ENCODE measurements at regions of chr11 and their contacts with region 1.

Region 1: GRCh38 chr11:86145439-86146156 is 76.7 kb upstream of the PICALM start:
- DNase-seq: no peak
- H3K4me3 ChIP-seq: no peak overlapping the region
- H3K27ac ChIP-seq: peak overlapping the region in 28 of 59 donors; percentile 0 to 80 (median 46)
- H3K27me3 ChIP-seq: no peaks in the 10 kb centered on the region
- CTCF ChIP-seq: no peak

Region 2: DNA sequence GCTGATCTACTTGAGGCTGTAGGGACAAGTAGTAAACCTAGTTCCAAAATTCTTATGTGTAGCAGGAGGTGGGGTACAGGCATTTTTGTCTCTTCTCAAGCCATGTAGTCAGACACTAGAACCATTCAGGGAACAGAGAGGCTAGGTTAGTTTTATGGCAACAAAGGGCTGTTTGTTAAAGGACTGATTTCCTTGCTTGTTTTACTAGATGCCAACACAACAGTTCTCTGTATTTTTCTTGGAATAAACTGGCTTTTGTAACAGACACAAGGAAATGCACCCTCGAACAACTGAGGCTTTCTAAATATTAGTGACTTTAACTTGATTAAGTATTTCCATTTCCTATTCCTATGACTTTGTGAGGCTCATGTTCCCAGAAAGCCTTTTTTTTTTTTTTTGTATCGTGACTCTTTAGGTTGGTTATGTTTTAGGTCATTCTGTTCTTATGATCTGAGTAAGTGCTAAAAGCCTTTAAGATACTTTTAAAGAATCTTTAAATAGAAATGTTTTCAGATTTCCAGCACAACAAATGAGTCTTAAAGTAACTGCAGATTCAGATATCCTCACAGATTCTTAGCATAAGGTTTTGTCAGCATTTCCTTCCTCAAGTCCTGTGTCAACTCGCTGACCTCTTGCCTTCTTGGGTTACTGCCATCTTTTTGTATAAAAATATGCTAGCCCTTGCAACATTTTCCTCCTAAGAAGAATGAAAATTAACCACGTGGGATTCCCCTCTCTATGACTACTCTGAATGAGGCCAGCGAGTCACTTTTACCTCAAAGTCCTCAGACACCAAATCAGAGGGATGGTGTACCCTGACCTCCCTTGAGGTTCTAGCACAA is 197.9 kb before region 1 on chr11:
- intact Hi-C with region 1: loop called in 1 of 2 experiments (anchors 5 kb)
- DNase-seq: no peak
- H3K4me3 ChIP-seq: peak overlapping the region in 20 of 59 donors; percentile 2 to 38 (median 22)
- H3K27ac ChIP-seq: peak overlapping the region; percentile 11 to 96 (median 84)
- H3K27me3 ChIP-seq: no peaks in the 10 kb centered on the region
- CTCF ChIP-seq: peak in 11 of 56 donors; percentile 5 to 39 (median 14)

Region 3: DNA sequence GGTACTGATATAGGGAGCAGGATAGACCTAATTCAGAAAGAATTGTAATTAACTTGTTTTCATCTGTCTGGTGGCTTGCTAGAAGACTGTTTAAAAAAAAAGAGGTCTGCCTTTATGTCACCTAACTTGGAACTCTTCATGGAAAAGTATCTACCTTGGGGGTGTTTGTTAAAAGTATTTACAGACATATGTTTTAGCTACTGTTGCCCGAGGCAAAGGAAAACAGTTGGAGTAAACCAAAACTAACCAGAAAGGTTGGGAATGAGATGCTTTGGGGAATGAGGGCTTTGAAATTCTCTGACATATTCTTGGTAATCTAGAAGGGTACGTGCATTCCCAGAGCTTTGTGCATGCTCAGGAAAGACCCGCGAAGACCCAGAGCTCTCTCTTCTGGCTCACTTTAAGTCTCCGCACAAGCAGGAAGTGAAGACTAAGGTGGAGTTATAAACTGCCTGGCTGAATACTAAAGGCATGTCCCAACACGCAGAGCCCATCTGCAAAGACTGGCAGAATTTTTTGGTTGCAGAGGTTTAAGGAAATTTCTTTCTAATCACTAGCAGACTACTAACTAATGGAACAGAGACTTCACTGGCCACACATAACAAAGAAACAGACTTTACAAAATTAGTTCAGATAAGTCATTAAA is 189.6 kb after region 1 on chr11:
- intact Hi-C with region 1: no loop called
- DNase-seq: no peak
- H3K4me3 ChIP-seq: no peak overlapping the region
- H3K27ac ChIP-seq: no peak overlapping the region
- H3K27me3 ChIP-seq: no peaks in the 10 kb centered on the region
- CTCF ChIP-seq: no peak

Measured in dorsolateral prefrontal cortex (tissue), 120 donors.